Activated T-helper 1 cell treated with anti-CD3 and anti-CD28 coated beads, Interleukin-12 subunit alpha, Interleukin-12 subunit beta, Interleukin-2, Interleukin-4 antibody, amounts not matched to agents 30 ng/mL and 10 ng/mL and 1 ng/mL, durations not matched to agents 14 hours and 24 hours and 36 hours (primary cell): ENCODE measurements at regions of chrX and their contacts with region 1.

Region 1: DNA sequence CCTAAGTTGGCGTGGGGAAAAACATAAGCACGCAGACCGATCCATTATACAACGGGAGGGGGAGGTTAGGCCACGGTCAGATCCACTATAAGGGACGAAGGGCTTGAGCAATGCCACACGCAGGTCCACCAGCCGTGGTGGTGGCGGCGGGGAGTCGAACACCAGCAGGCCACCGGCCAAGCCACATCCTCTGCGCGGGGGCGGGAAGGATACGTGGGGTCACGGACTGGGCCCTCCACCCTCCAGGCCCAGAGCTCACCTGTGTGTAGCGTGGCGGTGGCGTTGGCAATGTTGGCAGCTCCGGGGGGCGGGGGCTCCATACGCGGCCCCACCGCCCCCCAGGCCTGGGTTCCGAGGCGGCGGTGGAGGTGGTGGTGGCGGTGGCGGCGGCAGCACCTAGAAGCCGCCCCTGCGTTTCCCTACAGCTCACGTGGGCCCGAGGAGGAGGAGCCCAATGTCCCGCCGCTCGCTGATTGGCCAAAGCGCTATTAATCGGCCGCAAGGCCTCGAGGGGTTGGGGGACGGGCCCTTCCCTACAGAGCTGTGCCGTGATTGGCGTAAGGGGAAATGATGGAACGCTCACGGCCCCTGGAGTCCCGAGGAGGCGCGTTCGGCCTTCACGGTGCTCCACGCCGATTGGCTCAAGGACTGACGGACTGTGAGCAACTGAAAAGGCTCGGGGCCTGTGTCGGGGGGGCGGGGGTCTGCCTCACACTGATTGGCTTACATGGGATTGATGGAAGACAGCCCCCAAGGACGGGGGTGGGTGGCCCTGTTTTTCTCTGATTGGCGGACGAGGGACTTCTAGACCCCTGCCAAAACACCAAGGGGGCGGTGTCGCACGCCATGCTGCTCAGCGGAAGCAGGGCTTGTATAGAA is at the start of gene ELK1:
- DNase-seq: peak; percentile 85
- H3K4me3 Mint-ChIP-seq: peak within 1 kb of the TSS; percentile 95
- H3K27ac Mint-ChIP-seq: peak within 1 kb of the TSS; percentile 96
- H3K4me1 Mint-ChIP-seq: peaks cover 66% of the 10 kb centered on the region
- H3K27me3 Mint-ChIP-seq: no peaks in the 10 kb centered on the region
- total RNA-seq, gene ELK1: 99.3 TPM in 2 replicates

Region 2: DNA sequence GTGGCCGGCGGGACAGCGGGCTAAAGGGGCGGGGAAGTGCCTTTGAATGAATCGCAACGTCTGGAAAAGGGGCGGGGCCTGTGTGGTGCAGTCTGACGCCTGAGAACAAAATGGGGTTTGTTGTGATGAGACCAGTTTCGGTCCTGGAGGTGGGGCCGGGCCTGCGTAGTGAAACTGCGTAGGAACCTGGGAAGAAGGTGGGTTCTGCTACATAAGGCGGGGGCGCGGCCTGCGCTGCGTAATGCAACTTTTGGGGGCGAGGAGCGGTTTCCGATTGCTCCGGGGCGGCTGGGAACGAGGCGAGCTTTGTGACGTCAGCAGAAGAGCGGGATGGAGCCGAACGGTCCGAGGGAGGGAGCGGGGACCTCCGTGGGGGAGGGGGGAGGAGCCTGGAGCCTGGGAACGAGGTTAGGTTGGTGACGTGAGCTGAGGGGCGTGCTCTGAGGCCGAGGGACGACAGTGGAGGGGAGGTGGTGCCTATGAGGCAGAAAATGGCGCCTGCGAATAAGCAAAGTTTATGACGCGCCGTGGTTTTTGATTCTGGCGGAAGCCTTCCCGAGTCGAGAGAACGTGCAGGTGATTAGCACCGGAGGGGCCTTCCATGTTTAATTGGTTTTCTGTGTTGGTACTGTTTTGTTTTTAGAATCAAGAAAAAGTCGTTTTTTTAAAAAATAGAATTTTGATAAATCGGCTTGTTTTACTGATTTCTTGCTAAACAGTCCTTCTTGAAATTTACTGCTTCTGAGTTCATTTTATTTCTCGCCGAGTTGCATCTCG is 416.9 kb before region 1 on chrX:
- intact Hi-C with region 1: loop called (anchors 1 kb)
- DNase-seq: peak; percentile 87
- H3K4me3 Mint-ChIP-seq: peak overlapping the region; percentile 87
- H3K27ac Mint-ChIP-seq: peak overlapping the region; percentile 90
- H3K4me1 Mint-ChIP-seq: peaks cover 19% of the 10 kb centered on the region
- H3K27me3 Mint-ChIP-seq: no peaks in the 10 kb centered on the region

Region 3: GRCh38 chrX:47581731-47582647 is 68.4 kb before region 1 on chrX and contains the start of gene TIMP1:
- intact Hi-C with region 1: loop called (anchors 1 kb)
- DNase-seq: peak; percentile 78
- H3K4me3 Mint-ChIP-seq: peak within 1 kb of the TSS; percentile 67
- H3K27ac Mint-ChIP-seq: peak within 1 kb of the TSS; percentile 67
- H3K4me1 Mint-ChIP-seq: peaks cover 46% of the 10 kb centered on the region
- H3K27me3 Mint-ChIP-seq: peaks cover 3% of the 10 kb centered on the region
- total RNA-seq, gene TIMP1: 61.7 and 70.1 TPM in 2 replicates

Region 4: DNA sequence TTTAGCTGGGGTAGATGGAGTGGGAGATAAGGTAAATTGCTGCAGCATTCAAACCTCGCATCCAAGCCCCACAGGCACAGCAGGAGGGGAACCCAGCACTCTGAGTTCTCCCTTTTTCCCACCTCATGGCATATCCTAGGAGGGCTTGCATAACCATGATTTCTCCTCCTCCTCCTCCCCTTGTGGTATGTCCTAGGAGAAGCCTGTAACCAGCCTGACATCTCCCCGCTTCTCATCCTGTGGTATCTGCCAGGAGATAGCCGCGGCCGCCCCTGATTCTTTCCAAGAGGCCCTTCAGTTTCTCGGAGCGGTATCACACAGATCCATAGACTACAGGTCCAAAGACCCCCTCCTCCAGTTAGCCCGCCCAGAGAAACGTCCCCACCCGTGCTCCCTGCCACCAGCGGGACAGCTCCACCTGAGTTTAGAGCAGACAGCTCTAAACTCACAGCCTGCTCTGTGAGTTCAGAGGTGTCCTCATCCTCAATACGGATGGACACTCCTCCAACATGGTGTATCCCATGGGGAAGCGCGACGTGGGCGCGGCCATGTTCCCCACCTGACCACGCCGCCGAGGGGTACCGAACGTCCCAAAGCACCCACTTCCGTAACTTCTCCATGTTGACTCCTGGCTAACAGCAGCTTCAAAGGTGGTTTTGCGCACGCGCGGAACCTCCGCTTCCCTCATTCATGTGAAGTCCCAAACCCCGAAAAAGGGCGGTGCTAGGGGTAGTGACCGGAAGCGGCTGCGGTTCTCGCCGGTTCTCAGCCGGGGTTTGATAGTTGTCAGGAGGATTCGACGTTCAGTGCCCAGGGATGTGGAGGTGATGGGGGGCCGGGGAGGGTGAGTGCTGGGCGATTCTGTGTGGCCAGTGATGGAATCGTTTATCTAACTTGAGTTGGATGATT is 186.0 kb after region 1 on chrX and contains the start of gene ZNF81:
- intact Hi-C with region 1: loop called (anchors 2 kb)
- DNase-seq: peak; percentile 87
- H3K4me3 Mint-ChIP-seq: peak within 1 kb of the TSS; percentile 98
- H3K27ac Mint-ChIP-seq: peak within 1 kb of the TSS; percentile 97
- H3K4me1 Mint-ChIP-seq: peaks cover 13% of the 10 kb centered on the region
- H3K27me3 Mint-ChIP-seq: no peaks in the 10 kb centered on the region
- total RNA-seq, gene ZNF81: 5.9 and 9.2 TPM in 2 replicates

Region 5: DNA sequence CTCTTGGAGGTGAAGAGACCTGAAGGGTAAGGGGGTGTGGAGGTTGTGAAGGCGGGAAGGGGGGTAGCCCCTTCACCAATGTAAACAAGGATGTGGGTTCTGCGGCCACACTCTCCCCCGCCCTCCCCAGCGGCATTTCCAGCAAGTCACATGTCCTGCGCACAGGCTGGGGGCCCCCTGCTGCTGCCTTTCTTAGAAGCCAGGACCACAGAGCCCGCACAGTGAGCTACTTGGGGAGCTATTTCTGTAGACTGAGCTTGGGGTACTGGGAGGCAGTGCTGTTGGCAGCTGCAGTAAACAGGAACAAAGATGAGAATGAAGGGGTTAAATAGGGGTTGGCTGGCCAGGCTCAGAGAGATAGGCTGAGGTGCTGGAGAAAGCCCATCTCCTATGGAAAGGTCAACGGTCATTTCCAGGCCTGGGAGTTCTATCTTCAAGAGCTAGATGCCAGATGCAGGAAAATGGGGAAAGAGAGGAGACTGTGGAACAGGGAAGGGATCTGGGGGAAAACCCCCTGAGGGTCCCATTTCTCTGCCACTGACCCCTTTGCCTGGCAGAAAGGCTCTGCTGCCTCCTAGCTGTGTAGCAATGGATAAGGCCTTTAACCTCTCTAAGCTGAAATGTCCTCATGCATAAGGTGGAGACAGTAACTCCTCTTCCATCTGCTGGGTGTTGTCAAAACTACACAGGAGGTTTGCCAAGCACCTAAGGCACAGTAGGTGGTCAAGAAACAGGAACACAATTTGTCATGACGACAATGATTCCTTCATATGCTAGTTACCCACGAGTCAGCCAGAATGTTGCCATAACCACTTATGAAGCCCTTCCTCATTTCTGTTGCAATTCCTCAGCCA is 1286.9 kb after region 1 on chrX:
- intact Hi-C with region 1: loop called (anchors 10 kb)
- DNase-seq: peak; percentile 85
- H3K4me3 Mint-ChIP-seq: peak overlapping the region; percentile 87
- H3K27ac Mint-ChIP-seq: peak overlapping the region; percentile 97
- H3K4me1 Mint-ChIP-seq: peaks cover 80% of the 10 kb centered on the region
- H3K27me3 Mint-ChIP-seq: no peaks in the 10 kb centered on the region